Heart left ventricle (tissue), 16 donors: ENCODE measurements at regions of chr12 and their contacts with region 1.

Region 1: GRCh38 chr12:40921563-40922163 is 229.4 kb downstream of the CNTN1 start:
- DNase-seq: no peak
- ATAC-seq: no peak
- H3K4me3 ChIP-seq: no peak overlapping the region
- H3K27ac ChIP-seq: no peak overlapping the region
- H3K4me1 ChIP-seq: no peaks in the 10 kb centered on the region
- H3K27me3 ChIP-seq: peaks cover 0 to 4% (median 0%) of the 10 kb centered on the region in 9 donors
- CTCF ChIP-seq: peak; percentile 47 to 70 (median 58)
- POLR2A ChIP-seq: no peak

Region 2: GRCh38 chr12:40336573-40337199 is 585.0 kb before region 1 on chr12:
- intact Hi-C with region 1: loop called in 3 of 10 experiments (anchors 5 kb)
- DNase-seq: no peak
- ATAC-seq: peak in 1 of 4 donors; percentile 57
- H3K4me3 ChIP-seq: no peak overlapping the region
- H3K27ac ChIP-seq: no peak overlapping the region
- H3K4me1 ChIP-seq: peaks cover 0 to 19% (median 0%) of the 10 kb centered on the region in 12 donors
- H3K27me3 ChIP-seq: no peaks in the 10 kb centered on the region
- CTCF ChIP-seq: peak in 11 of 12 donors; percentile 19 to 55 (median 37)
- POLR2A ChIP-seq: no peak

Region 3: GRCh38 chr12:40622246-40622838 is 299.3 kb before region 1 on chr12:
- intact Hi-C with region 1: loop called in 8 of 10 experiments (anchors 2 to 10 kb)
- DNase-seq: peak in 1 of 5 donors; percentile 31
- ATAC-seq: no peak
- H3K4me3 ChIP-seq: no peak overlapping the region
- H3K27ac ChIP-seq: no peak overlapping the region
- H3K4me1 ChIP-seq: no peaks in the 10 kb centered on the region
- H3K27me3 ChIP-seq: no peaks in the 10 kb centered on the region
- CTCF ChIP-seq: peak; percentile 35 to 69 (median 56)
- POLR2A ChIP-seq: no peak